PC-3 (cell line): ENCODE measurements at regions of chr9 and their contacts with region 1.

Region 1: DNA sequence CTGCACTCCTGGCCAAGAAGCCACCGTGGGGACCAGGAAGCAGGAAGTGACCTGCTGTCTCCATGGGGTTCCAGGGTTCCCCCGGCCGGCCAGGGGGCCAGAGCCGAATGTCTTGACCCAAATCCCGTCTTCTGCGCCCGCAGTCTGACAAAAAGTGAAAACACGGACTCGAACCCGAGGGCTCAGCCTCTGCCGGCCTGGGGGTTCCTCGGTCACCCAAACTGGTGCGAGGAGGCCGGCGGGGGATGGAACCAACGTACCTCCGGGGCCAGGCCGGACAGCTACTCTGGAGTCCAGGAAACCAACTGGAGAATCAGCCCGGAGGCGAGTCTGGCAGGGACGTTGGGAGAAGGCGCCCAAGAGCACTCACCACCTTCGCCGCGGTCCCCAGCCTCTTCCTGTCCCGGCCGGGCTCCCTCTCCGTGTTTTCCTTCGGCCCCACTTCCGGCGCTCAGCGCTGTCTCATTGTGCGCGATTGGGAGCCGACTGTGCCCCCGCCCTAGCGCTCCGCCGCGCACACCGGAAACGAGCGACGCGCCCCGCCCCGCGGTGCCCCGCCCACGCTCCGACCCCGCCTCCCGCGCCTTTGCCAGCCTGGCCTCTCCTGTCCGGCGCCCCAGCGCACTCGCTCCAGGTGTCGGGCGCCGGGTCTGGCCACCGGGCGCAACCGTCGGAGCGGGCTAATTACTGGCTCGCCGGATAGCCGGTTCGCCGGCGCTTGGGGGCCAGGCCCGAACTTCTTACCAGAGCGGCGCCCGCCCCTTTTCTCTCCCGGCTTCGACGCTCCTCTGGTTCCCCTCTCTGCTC is at the start of gene TUT7:
- DNase-seq: peak; percentile 93
- ATAC-seq: peak; percentile 82
- H3K4me3 ChIP-seq: peak within 1 kb of the TSS; percentile 100
- H3K27ac ChIP-seq: peak within 1 kb of the TSS; percentile 76
- H3K4me1 ChIP-seq: peaks cover 22% of the 10 kb centered on the region
- H3K27me3 ChIP-seq: no peaks in the 10 kb centered on the region
- CTCF ChIP-seq: no peak
- total RNA-seq, gene TUT7: 12.3 and 17.0 TPM in 2 replicates

Region 2: DNA sequence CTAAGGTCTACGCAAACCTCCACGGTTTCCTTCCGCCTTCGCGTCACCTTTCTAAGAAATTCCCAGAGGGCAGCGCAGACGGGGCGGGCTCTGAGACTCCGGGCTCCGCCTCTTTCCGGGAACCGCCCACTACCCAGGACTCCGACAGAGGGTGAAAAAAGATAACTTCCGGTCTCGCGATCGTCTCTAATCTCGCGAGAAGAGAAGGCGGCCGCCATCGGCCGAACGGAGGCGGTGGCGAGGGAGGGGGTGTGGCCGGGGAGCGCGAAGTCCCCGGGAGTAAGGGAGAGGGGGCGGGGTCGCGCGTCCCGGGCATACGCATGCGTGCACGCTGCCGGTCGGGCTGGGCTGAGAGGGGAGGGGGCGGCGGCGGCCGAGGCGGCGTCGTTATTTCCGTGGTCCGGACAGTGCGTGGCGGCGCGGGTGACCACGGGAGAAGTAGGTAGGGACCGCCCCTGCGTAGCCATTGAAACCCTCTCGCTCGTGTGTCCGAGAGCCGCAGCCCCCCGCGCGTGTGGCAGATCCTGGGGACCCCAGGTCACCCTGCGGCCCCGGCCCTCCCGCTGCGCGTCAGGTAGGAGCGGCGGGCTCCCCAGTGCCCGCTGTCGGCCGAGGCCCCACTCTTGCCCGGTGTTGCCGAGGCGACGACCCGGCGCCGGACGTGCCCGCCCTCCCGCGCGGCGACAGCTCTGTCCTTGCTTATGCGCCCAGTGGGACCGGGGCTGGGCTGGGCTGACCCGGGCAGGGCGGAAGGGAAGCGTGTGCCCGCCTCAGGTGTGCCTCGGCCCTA is 413.2 kb before region 1 on chr9 and contains the start of gene NAA35:
- CTCF ChIA-PET with region 1: no interaction called
- POLR2A ChIA-PET with region 1: no interaction called
- intact Hi-C with region 1: loop called (anchors 5 kb)
- DNase-seq: peak; percentile 97
- ATAC-seq: peak; percentile 85
- H3K4me3 ChIP-seq: peak within 1 kb of the TSS; percentile 96
- H3K27ac ChIP-seq: peak within 1 kb of the TSS; percentile 55
- H3K4me1 ChIP-seq: peaks cover 21% of the 10 kb centered on the region
- H3K27me3 ChIP-seq: no peaks in the 10 kb centered on the region
- CTCF ChIP-seq: no peak
- total RNA-seq, gene NAA35: 12.2 and 14.6 TPM in 2 replicates

Region 3: DNA sequence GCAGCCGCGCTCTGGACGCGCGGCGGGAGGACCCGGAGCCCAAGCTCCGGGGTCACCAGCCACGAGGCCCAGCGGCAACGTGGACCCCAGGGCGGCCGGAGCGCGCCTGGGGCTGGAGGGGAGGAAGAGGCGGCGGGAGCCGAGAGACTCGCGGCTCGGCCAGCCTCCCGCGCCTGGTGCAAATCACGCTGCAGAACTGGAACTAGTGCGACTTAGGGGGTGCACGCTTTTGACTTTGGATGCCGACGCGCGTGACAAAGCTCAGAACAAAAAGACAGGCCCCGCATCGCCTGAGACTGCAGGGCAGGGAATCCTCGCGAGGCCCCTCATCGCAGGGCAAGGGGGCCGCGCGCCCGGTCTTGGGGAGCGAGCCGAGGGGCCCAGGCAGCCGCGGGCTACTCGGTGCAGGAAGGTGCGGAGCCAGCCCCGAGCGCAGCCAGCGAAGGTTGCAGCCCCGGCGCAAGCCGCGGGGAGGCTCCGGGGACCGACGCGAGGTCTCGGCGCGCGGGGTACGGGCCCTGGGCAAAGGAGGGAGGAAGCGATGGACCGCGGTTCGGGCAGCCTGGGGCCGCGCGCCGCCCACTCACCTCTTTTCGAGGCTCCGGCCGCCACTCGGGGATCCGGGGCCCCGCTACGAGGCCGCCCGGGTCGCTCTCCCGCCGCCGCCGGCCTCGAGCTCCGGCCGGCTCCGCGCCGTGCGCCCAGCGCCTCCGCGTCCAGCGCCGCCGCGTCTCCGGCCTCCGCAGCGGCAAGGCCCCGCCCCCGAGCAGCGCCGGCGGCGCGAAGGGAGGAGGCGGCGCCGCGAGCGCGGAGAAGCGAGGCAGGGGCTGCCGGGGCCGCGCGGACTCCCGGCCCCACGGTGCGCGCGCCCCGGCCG is 255.2 kb before region 1 on chr9 and contains the start of gene GOLM1:
- CTCF ChIA-PET with region 1: no interaction called
- POLR2A ChIA-PET with region 1: no interaction called
- intact Hi-C with region 1: loop called (anchors 10 kb)
- DNase-seq: peak; percentile 63
- ATAC-seq: peak; percentile 80
- H3K4me3 ChIP-seq: peak within 1 kb of the TSS; percentile 95
- H3K27ac ChIP-seq: peak within 1 kb of the TSS; percentile 39
- H3K4me1 ChIP-seq: peaks cover 21% of the 10 kb centered on the region
- H3K27me3 ChIP-seq: no peaks in the 10 kb centered on the region
- CTCF ChIP-seq: no peak
- total RNA-seq, gene GOLM1: 55.8 and 56.2 TPM in 2 replicates

Region 4: DNA sequence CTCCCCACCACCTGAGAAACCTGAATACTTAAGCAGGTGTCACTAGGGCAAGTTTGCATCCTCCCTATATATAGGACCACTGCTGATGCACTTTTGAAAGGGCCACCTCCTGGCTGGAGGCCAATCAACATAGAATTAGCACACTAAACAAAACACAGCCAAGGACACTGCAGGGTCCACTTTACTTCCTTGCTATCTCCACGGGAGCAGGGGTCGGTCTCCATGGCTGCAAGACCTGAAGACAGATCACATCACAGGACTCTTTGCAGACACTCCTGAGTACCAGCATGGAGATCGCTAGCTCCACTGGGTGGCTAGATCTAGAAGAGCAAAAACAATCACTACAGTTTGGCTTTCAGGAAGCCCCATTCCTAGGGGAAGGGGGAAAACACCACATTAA is 167.1 kb before region 1 on chr9:
- CTCF ChIA-PET with region 1: no interaction called
- POLR2A ChIA-PET with region 1: no interaction called
- intact Hi-C with region 1: no loop called
- DNase-seq: no peak
- ATAC-seq: no peak
- H3K4me3 ChIP-seq: no peak overlapping the region
- H3K27ac ChIP-seq: no peak overlapping the region
- H3K4me1 ChIP-seq: no peaks in the 10 kb centered on the region
- H3K27me3 ChIP-seq: no peaks in the 10 kb centered on the region
- CTCF ChIP-seq: no peak

Region 5: GRCh38 chr9:86202338-86202882 is 151.8 kb before region 1 on chr9:
- CTCF ChIA-PET with region 1: no interaction called
- POLR2A ChIA-PET with region 1: no interaction called
- intact Hi-C with region 1: loop called (anchors 10 kb)
- DNase-seq: peak; percentile 59
- ATAC-seq: peak; percentile 82
- H3K4me3 ChIP-seq: no peak overlapping the region
- H3K27ac ChIP-seq: no peak overlapping the region
- H3K4me1 ChIP-seq: no peaks in the 10 kb centered on the region
- H3K27me3 ChIP-seq: no peaks in the 10 kb centered on the region
- CTCF ChIP-seq: peak; percentile 76

Region 6: GRCh38 chr9:86282077-86282978 is 71.9 kb before region 1 on chr9 and contains the start of gene ISCA1:
- CTCF ChIA-PET with region 1: no interaction called
- POLR2A ChIA-PET with region 1: no interaction called
- intact Hi-C with region 1: loop called (anchors 1 kb)
- DNase-seq: peak; percentile 83
- ATAC-seq: peak; percentile 87
- H3K4me3 ChIP-seq: peak within 1 kb of the TSS; percentile 94
- H3K27ac ChIP-seq: peak within 1 kb of the TSS; percentile 81
- H3K4me1 ChIP-seq: peaks cover 13% of the 10 kb centered on the region
- H3K27me3 ChIP-seq: no peaks in the 10 kb centered on the region
- CTCF ChIP-seq: no peak
- total RNA-seq, gene ISCA1: 28.8 and 29.1 TPM in 2 replicates

Region 7: DNA sequence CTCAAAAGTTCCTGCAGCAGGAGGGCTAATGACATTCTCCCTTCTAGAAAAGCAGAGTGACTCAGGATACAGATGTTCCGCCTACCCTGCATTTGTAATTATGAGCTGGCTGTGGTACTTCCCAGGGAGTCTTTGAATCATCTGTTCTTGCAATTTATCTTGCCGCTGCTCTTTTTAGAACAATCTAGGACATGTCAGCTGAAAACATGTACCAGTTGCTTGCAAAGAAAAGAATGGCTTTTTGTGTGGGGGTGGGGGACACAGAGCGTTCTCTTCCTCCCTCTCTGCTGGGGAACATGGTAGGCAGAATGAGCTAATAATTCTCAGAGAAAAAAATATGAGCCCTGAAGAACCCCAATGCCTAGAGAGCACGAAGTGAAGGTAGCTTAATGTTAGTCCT is 51.7 kb after region 1 on chr9:
- CTCF ChIA-PET with region 1: no interaction called
- POLR2A ChIA-PET with region 1: no interaction called
- intact Hi-C with region 1: loop called (anchors 10 kb)
- DNase-seq: peak; percentile 68
- ATAC-seq: peak; percentile 77
- H3K4me3 ChIP-seq: no peak overlapping the region
- H3K27ac ChIP-seq: 0 out of 2 replicates have a peak overlapping the region, but pooled peaks have one; percentile 33
- H3K4me1 ChIP-seq: peaks cover 20% of the 10 kb centered on the region
- H3K27me3 ChIP-seq: no peaks in the 10 kb centered on the region
- CTCF ChIP-seq: no peak